Cardiac septum (tissue), 1 donor: ENCODE measurements at regions of chrX and their contacts with region 1.

Region 1: DNA sequence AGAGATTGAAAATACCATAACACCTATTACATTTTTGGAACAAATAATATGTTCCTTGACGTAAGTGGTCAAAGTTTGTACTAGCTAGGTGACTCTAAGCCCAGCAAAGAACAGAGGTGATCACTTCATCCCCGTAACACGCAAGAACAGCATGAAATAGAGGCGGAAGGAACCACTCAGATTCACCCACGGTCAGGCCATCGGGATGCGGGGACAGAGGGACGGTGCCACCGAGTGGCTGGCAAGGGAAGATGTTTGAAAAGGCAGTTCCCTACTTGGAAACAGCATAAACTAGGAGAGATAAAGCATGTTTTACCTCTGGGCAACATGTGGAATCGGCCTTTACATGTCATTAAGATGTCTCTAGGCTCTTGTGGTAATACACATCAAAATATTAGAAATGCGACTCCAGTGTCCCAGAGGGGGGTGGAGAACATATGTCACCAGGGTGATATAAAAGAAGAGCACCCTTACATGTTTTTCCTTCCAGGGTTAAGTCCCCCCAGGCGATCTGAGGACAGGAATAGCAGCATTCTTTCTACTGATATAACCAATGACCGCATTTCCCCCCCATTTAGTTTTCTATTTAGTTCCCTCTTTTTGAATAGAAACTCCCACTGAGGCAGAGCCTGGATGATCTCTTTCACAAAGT is 84.0 kb downstream of the PHKA2 start:
- DNase-seq: no peak

Region 2: DNA sequence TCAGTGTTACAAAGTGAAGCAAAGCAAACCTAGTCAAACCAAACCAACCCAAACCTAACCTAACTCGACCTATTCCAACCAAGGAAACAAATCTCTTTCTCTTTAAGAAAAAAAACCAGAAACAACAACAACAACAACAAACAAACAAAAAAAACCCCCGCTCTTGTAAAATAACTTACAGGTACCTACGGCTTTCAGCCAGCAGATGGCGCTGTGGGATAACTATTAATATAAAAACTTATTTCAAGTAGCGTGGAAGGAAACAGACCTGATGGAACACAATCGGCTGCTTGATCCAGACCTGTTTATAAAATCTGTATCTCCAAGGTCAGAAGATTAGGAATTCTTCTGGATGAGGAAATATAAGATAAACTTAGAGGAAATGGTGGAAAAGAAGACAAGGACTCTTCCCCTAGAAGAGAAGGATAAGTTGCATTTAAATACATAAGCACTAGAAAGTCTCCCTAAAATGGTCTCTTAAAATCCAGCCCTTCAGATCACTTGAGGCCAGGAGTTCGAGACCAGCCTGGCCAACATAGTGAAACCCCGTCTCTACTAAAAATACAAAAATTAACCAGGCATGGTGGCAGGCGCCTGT is 508.9 kb before region 1 on chrX:
- intact Hi-C with region 1: loop called (anchors 10 kb)
- DNase-seq: no peak

Region 3: DNA sequence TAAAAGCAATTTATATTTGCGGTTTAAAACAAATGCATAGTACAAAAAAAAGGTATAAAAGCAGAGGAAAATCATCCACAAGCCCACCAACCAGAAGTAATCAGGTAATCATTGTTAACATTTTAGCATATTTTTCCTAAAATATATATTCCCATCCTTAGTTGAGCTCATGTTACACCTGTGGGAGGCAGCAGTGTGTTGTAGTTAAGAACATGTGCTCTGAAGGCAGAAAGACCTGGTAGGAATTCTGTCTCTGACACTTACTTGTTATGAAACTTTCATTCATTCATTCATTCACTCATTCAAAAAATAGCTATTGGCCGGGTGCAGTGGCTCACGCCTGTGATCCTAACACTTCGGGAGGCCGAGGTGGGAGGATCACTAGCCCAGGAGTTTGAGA is 489.9 kb before region 1 on chrX:
- intact Hi-C with region 1: loop called (anchors 5 kb)
- DNase-seq: no peak

Region 4: GRCh38 chrX:18425199-18426003 is 474.5 kb before region 1 on chrX and contains the start of gene CDKL5:
- intact Hi-C with region 1: loop called (anchors 5 kb)
- DNase-seq: peak; percentile 98
- total RNA-seq, gene CDKL5: 10.7 TPM

Region 5: DNA sequence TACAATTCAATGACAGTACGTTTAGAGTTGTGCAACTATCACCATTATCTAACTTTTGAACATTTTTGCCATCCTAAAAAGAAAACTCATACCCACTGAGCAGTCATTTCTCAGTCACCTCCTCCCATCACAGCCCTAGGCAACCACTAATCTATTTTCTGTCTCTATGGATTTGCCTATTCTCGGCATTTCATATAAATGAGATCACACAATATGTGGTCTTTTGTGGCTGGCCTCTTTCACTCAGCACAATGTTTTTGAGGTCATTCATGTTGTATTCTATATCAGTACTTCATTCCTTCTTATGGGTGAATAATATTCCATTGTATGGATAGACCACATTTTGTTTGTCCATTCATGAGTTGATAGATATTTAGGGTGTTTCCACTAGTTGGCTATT is 89.5 kb before region 1 on chrX:
- intact Hi-C with region 1: no loop called
- DNase-seq: no peak

Region 6: GRCh38 chrX:19107035-19107434 is 207.1 kb after region 1 on chrX:
- intact Hi-C with region 1: no loop called
- DNase-seq: no peak